ENCODE measurements at regions of chr17 and their contacts with region 1.

Region 1: GRCh38 chr17:38415250-38416194 is 12.7 kb upstream of the ARHGAP23 start:
- DNase-seq: no peak
- H3K4me3 Mint-ChIP-seq: no peak overlapping the region
- H3K27ac Mint-ChIP-seq: peak overlapping the region; percentile 33
- H3K4me1 Mint-ChIP-seq: peaks cover 14% of the 10 kb centered on the region
- H3K27me3 Mint-ChIP-seq: peaks cover 61% of the 10 kb centered on the region

Region 2: GRCh38 chr17:38333635-38334295 is 81.8 kb before region 1 on chr17:
- CTCF ChIA-PET with region 1: interaction called, 33 read pairs
- DNase-seq: peak; percentile 75
- H3K4me3 Mint-ChIP-seq: no peak overlapping the region
- H3K27ac Mint-ChIP-seq: no peak overlapping the region
- H3K4me1 Mint-ChIP-seq: no peaks in the 10 kb centered on the region
- H3K27me3 Mint-ChIP-seq: peaks cover 48% of the 10 kb centered on the region

Region 3: GRCh38 chr17:38403491-38403890 is 12.0 kb before region 1 on chr17:
- CTCF ChIA-PET with region 1: interaction called, 12 read pairs
- DNase-seq: no peak
- H3K4me3 Mint-ChIP-seq: no peak overlapping the region
- H3K27ac Mint-ChIP-seq: no peak overlapping the region
- H3K4me1 Mint-ChIP-seq: peaks cover 3% of the 10 kb centered on the region
- H3K27me3 Mint-ChIP-seq: no peaks in the 10 kb centered on the region

Region 4: DNA sequence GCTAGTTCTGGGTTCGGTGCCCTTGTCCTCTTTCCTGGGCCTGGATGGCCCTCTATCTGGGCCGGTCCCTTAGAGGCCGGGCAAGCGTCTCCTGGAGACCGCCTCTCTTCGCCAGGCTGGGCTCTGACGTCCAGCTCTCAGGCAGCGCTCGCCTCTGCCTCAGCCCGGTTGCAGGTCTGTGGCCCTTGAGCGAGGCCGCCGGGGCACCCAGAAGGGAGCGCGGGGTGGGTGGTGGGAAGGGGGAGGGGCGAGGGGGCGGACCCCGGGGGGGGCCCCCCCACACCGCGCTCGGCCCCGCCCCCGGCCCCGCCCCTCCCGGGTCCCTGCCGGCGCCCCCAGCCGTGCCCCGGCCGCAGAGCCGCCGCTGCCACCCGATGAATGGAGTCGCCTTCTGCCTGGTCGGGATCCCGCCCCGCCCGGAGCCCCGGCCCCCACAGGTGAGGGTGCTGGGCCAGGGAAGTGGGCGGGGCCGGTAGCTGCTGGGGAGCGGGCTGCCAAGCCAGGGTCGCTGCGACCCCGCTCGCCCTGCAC is 12.7 kb after region 1 on chr17 and contains the start of gene ARHGAP23:
- CTCF ChIA-PET with region 1: interaction called, 11 read pairs
- DNase-seq: peak; percentile 58
- H3K4me3 Mint-ChIP-seq: peak within 1 kb of the TSS; percentile 49
- H3K27ac Mint-ChIP-seq: no peak within 1 kb of the TSS
- H3K4me1 Mint-ChIP-seq: peaks cover 7% of the 10 kb centered on the region
- H3K27me3 Mint-ChIP-seq: peaks cover 82% of the 10 kb centered on the region

Region 5: DNA sequence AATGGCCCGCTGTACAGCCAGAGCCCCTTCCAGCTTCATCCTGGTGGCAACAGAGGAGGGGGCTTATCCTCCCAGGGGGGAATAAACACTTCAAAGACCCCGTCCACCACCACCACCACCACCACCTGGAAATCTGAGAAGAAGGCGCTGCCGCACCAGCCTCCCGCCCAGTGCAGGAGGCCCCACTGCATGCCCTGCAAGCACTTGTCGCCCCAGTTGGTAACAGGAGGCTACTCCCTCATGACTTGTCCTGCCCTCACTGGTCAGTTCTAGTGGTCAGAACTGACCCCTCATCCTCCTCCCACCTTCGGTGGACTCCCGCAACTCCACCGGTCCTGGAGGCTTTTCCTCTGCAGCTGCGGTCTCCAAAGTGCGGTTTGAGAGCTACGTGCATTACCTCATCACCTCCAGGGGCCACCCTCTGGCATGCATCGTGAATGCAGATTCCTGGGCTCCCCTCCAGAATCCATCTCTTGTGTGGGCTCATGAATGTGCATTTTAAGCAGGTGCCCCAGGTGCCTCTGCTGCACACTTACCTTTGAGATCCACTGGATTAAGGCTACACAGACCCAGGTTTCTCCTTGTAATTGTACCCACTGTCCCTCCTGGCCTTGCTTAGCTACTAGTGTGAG is 118.5 kb after region 1 on chr17:
- CTCF ChIA-PET with region 1: no interaction called
- DNase-seq: no peak
- H3K4me3 Mint-ChIP-seq: no peak overlapping the region
- H3K27ac Mint-ChIP-seq: no peak overlapping the region
- H3K4me1 Mint-ChIP-seq: no peaks in the 10 kb centered on the region
- H3K27me3 Mint-ChIP-seq: peaks cover 38% of the 10 kb centered on the region

Region 6: DNA sequence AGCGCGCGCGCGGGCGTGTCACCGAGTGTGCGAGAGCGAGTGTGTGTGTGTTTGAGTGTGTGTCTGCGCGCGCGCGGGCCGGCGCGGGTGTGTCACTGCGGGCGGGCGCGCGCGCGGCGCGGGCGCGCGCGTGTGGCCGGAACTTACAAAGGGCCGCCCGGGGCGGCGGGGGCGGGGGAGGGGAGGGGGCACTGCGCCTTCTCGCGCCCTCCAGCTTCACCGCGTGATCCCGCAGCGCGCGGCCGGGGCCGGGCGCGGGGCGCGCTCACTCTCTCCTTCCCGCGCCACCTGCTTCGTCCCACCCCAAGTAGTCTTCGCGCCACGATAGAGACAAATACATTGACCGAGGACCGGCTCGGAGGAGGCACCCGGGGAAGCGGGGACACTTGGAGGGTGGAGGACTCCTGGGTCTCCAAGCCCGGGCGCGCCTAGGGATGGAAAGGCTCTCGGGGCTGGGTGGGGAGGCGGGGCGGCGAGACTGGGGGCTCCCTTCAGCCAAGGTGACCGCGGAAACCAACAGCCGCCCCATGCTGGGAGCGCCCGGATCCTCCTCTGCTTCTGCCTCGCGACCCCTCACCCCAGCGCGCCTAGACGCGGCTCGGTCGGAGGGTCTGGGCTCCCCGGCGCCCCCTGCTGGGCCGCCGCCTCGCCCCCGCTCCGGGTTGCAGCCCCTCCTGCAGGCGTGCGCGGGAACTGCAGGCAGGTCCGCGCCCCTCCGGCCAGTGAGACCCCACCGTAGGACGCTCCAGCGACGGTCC is 190.5 kb after region 1 on chr17 and contains the start of gene SRCIN1:
- CTCF ChIA-PET with region 1: no interaction called
- DNase-seq: peak; percentile 64
- H3K4me3 Mint-ChIP-seq: peak within 1 kb of the TSS; percentile 61
- H3K27ac Mint-ChIP-seq: no peak within 1 kb of the TSS
- H3K4me1 Mint-ChIP-seq: peaks cover 14% of the 10 kb centered on the region
- H3K27me3 Mint-ChIP-seq: peaks cover 98% of the 10 kb centered on the region